AG04450 (cell line): ENCODE measurements at regions of chr14 and their contacts with region 1.

Region 1: GRCh38 chr14:35140718-35141581 is 18.6 kb downstream of the PRORP start:
- DNase-seq: no peak
- H3K4me3 ChIP-seq: no peak overlapping the region
- H3K27ac ChIP-seq: no peak overlapping the region
- H3K27me3 ChIP-seq: no peaks in the 10 kb centered on the region
- CTCF ChIP-seq: peak; percentile 29

Region 2: GRCh38 chr14:35155962-35156361 is 15.0 kb after region 1 on chr14:
- CTCF ChIA-PET with region 1: interaction called, 34 read pairs
- POLR2A ChIA-PET with region 1: no interaction called
- DNase-seq: peak; percentile 15
- H3K4me3 ChIP-seq: no peak overlapping the region
- H3K27ac ChIP-seq: no peak overlapping the region
- H3K27me3 ChIP-seq: no peaks in the 10 kb centered on the region
- CTCF ChIP-seq: no peak

Region 3: GRCh38 chr14:35495278-35495677 is 354.3 kb after region 1 on chr14:
- CTCF ChIA-PET with region 1: no interaction called
- POLR2A ChIA-PET with region 1: no interaction called
- DNase-seq: no peak
- H3K4me3 ChIP-seq: no peak overlapping the region
- H3K27ac ChIP-seq: no peak overlapping the region
- H3K27me3 ChIP-seq: no peaks in the 10 kb centered on the region
- CTCF ChIP-seq: no peak